Activated naive CD4-positive, alpha-beta T cell treated with anti-CD3 and anti-CD28 coated beads for 36 hours (primary cell): ENCODE measurements at regions of chr10 and their contacts with region 1.

Region 1: GRCh38 chr10:74898201-74898976 is 72.0 kb downstream of the KAT6B start:
- DNase-seq: peak; percentile 70
- H3K4me3 Mint-ChIP-seq: no peak overlapping the region
- H3K27ac Mint-ChIP-seq: peak overlapping the region; percentile 46
- H3K4me1 Mint-ChIP-seq: peaks cover 57% of the 10 kb centered on the region
- H3K27me3 Mint-ChIP-seq: no peaks in the 10 kb centered on the region

Region 2: DNA sequence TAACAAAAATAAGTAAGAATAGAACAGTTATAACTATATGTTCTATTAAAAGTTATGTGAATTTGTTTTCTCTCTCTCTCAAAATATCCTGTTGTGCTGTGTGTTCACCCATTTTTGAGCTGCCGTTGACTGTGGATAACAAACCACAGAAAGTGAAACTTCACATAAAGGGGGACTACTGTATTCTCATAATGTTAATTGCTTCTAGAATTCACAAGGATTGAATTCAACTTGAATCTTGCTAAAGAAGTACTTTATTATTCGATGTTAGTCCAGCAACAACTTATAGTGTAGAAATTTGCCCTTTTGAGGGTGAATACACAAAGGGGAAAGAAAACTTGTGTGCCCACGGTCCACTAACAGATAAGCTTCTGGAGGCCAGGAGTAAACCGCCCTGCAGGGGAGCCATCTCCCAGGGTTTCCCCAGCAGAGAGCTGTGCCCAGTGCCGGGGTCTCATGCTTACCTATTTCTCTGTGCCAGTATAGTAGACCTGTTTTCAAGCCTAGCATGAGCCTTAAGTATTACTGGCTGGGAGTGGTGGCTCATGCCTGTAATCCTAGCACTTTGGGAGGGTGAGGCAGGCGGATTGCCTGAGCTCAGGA is 15.1 kb after region 1 on chr10:
- CTCF ChIA-PET with region 1: interaction called, 12 read pairs
- intact Hi-C with region 1: no loop called
- DNase-seq: no peak
- H3K4me3 Mint-ChIP-seq: peak overlapping the region; percentile 6
- H3K27ac Mint-ChIP-seq: no peak overlapping the region
- H3K4me1 Mint-ChIP-seq: peaks cover 40% of the 10 kb centered on the region
- H3K27me3 Mint-ChIP-seq: no peaks in the 10 kb centered on the region